ENCODE measurements at regions of chr6 and their contacts with region 1.

Region 1: DNA sequence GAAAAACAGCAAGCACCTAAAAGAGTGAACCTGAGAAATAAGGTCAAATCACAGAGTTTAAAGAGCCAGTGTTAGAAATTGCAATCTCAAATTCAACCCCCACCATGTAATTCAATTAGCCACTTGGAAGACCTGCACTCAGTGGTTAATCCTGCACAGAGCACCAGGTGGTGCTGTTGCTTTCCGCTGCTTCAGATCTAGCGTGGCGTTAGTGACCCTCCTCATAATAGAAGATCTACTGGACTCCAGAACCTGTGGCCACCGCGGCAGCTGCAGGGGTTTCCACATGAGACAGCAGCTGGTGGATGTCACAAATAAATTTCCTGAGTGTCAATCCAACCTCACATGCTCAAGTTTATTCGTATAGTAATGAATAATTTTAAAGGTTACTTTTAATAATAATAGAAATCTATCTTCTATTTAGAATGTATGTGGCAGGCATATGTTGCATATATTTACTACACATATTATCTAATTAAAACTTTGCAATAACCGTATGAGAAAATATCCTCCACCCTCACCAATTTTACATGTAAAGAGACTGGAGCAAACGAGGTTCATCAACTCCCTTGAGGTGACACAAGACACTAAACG is 84.4 kb downstream of the SYNE1 start:
- DNase-seq: peak in 7 of 9 experiments; percentile 2 to 73 (median 26)
- ATAC-seq: peak; percentile 40
- H3K4me3 ChIP-seq: no peak overlapping the region
- H3K4me3 Mint-ChIP-seq: no peak overlapping the region
- H3K27ac ChIP-seq: no peak overlapping the region
- H3K27ac Mint-ChIP-seq: no peak overlapping the region
- H3K4me1 ChIP-seq: no peaks in the 10 kb centered on the region
- H3K4me1 Mint-ChIP-seq: no peaks in the 10 kb centered on the region
- H3K27me3 ChIP-seq: no peaks in the 10 kb centered on the region
- H3K27me3 Mint-ChIP-seq: peaks cover 7% of the 10 kb centered on the region
- CTCF ChIP-seq: peak; percentile 44

Region 2: DNA sequence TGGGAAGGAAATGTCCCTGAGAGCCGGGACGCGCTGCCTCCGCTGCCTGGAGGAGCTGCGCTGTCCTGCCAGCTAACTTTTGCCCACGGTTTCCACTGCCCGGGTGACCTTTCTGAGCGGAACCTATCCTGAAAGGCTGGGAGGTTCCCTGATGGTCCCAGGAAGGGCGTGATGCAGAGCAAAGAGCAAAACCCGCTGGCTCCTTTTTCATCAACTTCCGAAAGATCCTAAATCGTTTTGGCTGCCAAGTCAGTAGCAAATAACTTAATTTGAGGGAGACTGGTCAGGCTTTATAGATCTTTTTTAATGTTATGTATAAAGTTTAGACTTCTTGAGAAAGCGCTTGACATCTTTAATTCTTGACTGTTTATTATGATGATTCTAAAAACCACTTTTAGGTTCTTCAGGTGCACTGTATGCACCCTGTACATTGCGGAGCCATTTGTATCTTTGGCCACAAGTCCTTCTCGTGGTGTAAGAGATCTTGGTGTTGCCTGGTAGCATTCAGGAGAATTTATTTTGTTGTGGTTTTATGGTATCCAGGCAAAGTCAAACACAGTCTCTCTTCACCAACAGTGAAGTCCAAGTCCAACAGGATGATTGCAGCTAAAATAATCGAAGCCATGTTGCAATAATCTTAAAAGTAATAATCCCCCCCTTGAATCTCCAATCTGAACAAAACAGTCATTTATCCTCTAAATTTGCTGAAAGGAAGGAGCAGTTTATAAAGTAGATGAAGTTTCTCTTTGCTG is 84.8 kb after region 1 on chr6 and contains the start of gene SYNE1:
- CTCF ChIA-PET with region 1: interaction called, 27 read pairs
- POLR2A ChIA-PET with region 1: no interaction called
- intact Hi-C with region 1: loop called in 1 of 2 experiments (anchors 1 kb)
- DNase-seq: no peak
- ATAC-seq: no peak
- H3K4me3 ChIP-seq: peak within 1 kb of the TSS; percentile 33 to 72
- H3K4me3 Mint-ChIP-seq: peak within 1 kb of the TSS; percentile 89
- H3K27ac ChIP-seq: peak within 1 kb of the TSS; percentile 63 to 83
- H3K27ac Mint-ChIP-seq: peak within 1 kb of the TSS; percentile 93
- H3K4me1 ChIP-seq: no peaks in the 10 kb centered on the region
- H3K4me1 Mint-ChIP-seq: peaks cover 20% of the 10 kb centered on the region
- H3K27me3 ChIP-seq: no peaks in the 10 kb centered on the region
- H3K27me3 Mint-ChIP-seq: peaks cover 36% of the 10 kb centered on the region
- CTCF ChIP-seq: no peak
- total RNA-seq, gene SYNE1: 88.2 to 90.2 TPM

Region 3: DNA sequence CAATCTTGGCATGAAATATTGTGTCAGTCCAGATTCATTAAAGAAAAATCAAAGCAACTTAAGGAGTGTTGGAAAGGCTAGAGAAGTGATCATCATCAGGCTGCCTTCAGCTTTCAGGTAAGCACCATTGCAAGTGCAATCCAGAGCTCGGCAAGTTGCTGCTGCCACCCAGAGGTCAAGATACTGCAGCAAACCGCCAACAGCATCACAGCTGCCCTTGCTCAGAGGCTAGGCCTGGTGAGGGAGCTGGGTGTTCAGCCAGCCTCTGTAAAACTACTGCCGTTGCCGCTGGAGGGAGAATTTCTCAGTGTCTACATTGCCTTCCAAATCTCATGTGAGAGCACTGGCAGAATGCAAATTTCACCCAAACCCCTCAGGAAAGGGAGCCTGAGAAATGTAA is 90.3 kb after region 1 on chr6:
- CTCF ChIA-PET with region 1: interaction called, 27 read pairs
- POLR2A ChIA-PET with region 1: no interaction called
- intact Hi-C with region 1: loop called (anchors 1 kb)
- DNase-seq: peak in 7 of 9 experiments; percentile 4 to 81 (median 45)
- ATAC-seq: peak; percentile 63
- H3K4me3 ChIP-seq: no peak overlapping the region
- H3K4me3 Mint-ChIP-seq: no peak overlapping the region
- H3K27ac ChIP-seq: no peak overlapping the region
- H3K27ac Mint-ChIP-seq: no peak overlapping the region
- H3K4me1 ChIP-seq: no peaks in the 10 kb centered on the region
- H3K4me1 Mint-ChIP-seq: peaks cover under 1% of the 10 kb centered on the region
- H3K27me3 ChIP-seq: no peaks in the 10 kb centered on the region
- H3K27me3 Mint-ChIP-seq: peaks cover 14% of the 10 kb centered on the region
- CTCF ChIP-seq: peak; percentile 15